Activated CD4-positive, alpha-beta memory T cell treated with anti-CD3 and anti-CD28 coated beads for 36 hours (primary cell): ENCODE measurements at regions of chr18 and their contacts with region 1.

Region 1: DNA sequence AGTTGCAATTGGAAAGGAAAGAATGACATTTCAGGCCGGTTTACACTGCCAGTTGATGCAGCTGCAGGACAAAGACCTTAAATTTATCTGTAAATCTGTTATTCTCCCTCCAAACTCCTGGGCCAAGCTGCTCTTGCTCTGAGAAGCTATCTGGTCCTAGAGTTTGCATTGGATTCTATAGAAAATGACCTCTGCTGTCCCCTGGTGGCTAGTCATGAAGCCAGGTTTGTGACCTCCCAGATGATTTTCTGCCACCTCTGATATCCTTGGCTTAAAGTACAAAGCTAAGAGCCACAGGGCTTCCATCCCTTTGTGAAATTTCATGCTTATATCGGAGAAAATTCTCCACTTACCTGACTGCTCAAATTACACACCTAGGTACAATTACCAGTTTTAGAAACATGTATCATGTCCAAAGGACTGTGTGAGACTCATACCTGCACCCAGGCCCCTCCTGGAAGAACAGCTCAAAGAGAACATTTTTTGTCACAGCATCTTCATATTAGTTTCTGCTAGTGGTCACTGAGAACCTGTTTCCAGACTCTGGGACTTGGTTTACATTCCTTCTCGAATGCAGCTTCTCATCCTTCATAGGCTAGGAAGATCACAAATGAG is 28.9 kb upstream of the IER3IP1 start:
- DNase-seq: peak; percentile 45
- H3K4me3 Mint-ChIP-seq: no peak overlapping the region
- H3K27ac Mint-ChIP-seq: no peak overlapping the region
- H3K4me1 Mint-ChIP-seq: no peaks in the 10 kb centered on the region
- H3K27me3 Mint-ChIP-seq: peaks cover 12% of the 10 kb centered on the region

Region 2: GRCh38 chr18:46849007-46849406 is 356.0 kb before region 1 on chr18:
- CTCF ChIA-PET with region 1: no interaction called
- POLR2A ChIA-PET with region 1: no interaction called
- intact Hi-C with region 1: no loop called
- DNase-seq: no peak
- H3K4me3 Mint-ChIP-seq: no peak overlapping the region
- H3K27ac Mint-ChIP-seq: no peak overlapping the region
- H3K4me1 Mint-ChIP-seq: peaks cover 2% of the 10 kb centered on the region
- H3K27me3 Mint-ChIP-seq: no peaks in the 10 kb centered on the region

Region 3: GRCh38 chr18:47050468-47050867 is 154.5 kb before region 1 on chr18:
- CTCF ChIA-PET with region 1: interaction called, 28 read pairs
- POLR2A ChIA-PET with region 1: no interaction called
- intact Hi-C with region 1: loop called (anchors 1 kb)
- DNase-seq: no peak
- H3K4me3 Mint-ChIP-seq: no peak overlapping the region
- H3K27ac Mint-ChIP-seq: no peak overlapping the region
- H3K4me1 Mint-ChIP-seq: no peaks in the 10 kb centered on the region
- H3K27me3 Mint-ChIP-seq: peaks cover 3% of the 10 kb centered on the region

Region 4: DNA sequence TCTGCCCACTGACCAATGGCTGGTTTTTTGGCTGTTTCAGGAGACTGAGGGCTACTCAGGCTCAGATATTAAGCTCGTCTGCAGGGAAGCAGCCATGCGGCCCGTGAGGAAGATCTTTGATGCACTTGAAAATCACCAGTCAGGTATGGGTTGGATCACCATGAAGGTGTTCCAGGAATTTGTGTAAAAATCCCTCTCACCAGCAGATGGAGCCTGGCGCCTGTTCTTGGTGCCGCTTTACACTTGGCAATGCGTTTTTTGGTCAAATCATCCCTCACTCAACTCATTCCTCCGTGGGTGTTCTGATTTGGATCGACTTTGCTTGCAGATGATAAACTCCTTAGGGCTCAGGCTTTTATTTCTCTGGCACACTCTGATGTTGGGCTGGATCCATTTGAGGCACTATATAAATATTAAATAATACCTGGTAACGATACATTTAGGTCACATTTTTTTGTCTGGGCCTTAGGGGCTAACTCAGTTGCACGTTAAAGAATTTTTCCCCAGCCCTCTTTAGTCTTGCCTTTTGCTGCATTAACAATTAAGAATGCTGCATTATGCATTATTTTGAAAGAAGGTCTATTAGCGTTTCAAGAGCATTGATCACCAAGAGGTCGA is 104.7 kb before region 1 on chr18:
- CTCF ChIA-PET with region 1: interaction called, 86 read pairs
- POLR2A ChIA-PET with region 1: no interaction called
- intact Hi-C with region 1: loop called (anchors 1 kb)
- DNase-seq: peak; percentile 75
- H3K4me3 Mint-ChIP-seq: no peak overlapping the region
- H3K27ac Mint-ChIP-seq: no peak overlapping the region
- H3K4me1 Mint-ChIP-seq: no peaks in the 10 kb centered on the region
- H3K27me3 Mint-ChIP-seq: no peaks in the 10 kb centered on the region

Region 5: DNA sequence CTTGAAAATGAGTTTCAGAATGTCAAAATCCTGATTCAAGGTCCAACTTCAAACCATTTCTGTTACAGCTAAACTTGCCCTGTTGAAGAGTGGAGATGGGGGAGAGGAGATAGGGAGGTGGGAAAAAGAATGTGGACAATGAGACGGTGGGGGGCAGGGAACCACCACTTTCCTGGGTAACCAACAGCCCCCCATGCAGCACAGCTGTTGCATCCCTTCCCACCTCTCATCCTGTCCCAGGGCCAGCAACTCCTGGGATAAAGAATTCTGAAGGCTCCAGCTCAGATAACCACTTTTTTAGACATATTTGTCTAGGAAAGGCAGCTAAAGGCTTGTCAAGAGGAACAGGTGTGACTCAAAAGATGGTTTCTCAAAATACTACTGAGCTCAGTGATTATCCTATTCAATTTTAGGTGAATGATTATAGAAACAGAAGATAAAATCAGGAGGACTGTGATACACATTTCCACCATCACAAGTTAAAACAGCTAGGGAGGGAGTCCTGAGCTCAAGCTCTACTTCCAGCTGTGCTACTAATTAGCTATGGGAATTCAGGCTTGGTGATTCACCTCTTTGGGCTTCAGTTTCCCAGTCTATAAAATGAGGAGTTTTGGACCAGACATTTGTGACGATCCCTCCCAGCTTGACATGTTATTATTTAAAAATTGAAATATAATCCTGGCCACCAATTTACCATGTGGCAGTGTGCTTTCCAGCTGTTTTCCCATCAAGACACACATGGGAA is 91.0 kb before region 1 on chr18:
- CTCF ChIA-PET with region 1: interaction called, 13 read pairs
- POLR2A ChIA-PET with region 1: no interaction called
- intact Hi-C with region 1: no loop called
- DNase-seq: no peak
- H3K4me3 Mint-ChIP-seq: no peak overlapping the region
- H3K27ac Mint-ChIP-seq: no peak overlapping the region
- H3K4me1 Mint-ChIP-seq: no peaks in the 10 kb centered on the region
- H3K27me3 Mint-ChIP-seq: no peaks in the 10 kb centered on the region

Region 6: DNA sequence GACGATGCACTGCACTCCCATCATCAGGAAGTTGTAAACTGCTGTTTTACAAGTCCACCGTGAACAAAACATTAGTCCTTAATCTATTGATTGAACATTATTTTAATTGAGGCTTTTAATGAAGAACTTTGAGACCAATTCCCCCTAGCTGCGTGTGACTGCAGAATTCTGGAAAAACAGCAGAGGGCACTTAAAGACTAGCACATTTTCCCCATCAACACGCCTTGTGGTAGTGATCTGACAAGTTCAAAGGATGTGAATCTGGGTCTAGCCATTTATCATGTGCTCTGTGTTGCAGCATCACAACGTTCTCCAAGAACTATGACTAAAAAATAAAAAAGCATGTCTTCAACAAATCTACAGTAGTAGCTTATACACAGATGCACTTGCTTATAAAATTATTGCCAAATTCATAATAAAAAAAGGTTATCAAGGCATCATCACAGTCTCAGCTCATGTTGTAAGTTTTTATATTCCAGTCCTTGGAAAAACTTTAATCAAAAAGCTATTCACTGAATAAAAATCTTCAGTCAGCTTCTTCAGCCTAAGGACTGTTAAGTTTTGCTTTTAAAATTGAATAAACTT is 10.6 kb after region 1 on chr18:
- CTCF ChIA-PET with region 1: interaction called, 26 read pairs
- POLR2A ChIA-PET with region 1: no interaction called
- intact Hi-C with region 1: no loop called
- DNase-seq: peak; percentile 26
- H3K4me3 Mint-ChIP-seq: no peak overlapping the region
- H3K27ac Mint-ChIP-seq: no peak overlapping the region
- H3K4me1 Mint-ChIP-seq: no peaks in the 10 kb centered on the region
- H3K27me3 Mint-ChIP-seq: peaks cover 27% of the 10 kb centered on the region